ENCODE measurements at regions of chr19 and their contacts with region 1.

Region 1: DNA sequence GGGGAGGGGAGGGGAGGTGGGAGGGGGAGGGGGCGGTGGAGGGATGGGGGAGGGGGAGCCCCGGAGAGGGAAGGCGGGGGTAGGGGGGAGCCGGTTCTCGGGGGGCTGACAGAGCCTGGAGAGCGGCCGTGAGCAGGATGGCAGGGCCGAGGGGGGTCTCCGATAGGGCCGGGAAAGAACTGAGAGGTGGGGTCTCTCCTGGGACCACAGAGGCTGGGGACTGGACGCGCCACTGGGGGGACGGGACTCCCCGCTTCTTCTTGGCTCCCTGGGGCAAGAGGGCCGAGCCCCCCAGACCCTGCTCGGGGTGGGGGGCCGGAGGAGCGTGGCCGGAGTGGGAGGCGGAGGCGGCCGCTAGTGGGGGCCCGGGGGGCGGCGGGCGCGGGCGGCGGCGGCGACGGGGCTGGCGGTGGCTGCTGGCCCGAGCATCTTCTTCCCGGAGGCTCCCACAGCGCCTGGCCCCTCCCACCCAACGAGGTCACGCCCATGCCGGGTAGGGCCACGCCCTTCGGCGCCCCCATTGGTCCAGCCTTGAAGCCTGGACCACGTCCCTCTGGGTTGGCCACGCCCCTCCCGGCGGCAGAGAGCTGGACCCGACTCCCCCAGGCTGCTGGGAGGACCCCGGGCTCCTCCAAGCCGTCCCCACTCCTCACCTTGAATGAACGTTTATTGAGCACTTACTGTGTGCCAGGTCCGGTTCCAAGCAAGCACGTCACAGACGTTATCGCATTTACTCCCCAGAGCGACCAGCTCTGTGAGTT is at the start of gene NOVA2:
- DNase-seq: peak; percentile 83 to 100
- H3K4me3 ChIP-seq: peak within 1 kb of the TSS; percentile 47 to 82 (median 56)
- H3K27ac ChIP-seq: no peak within 1 kb of the TSS
- H3K4me1 ChIP-seq: peaks cover 2 to 12% (median 7%) of the 10 kb centered on the region in 4 experiments; a peak in 5 of 7 replicates
- H3K27me3 ChIP-seq: peaks cover 0 to 5% (median 2%) of the 10 kb centered on the region in 4 experiments; a peak in 3 of 7 replicates
- CTCF ChIP-seq: no peak
- EP300 ChIP-seq: no peak
- POLR2A ChIP-seq: no peak
- RAD21 ChIP-seq: no peak
- total RNA-seq, gene NOVA2: 22.7 and 24.6 TPM in 2 replicates

Region 2: DNA sequence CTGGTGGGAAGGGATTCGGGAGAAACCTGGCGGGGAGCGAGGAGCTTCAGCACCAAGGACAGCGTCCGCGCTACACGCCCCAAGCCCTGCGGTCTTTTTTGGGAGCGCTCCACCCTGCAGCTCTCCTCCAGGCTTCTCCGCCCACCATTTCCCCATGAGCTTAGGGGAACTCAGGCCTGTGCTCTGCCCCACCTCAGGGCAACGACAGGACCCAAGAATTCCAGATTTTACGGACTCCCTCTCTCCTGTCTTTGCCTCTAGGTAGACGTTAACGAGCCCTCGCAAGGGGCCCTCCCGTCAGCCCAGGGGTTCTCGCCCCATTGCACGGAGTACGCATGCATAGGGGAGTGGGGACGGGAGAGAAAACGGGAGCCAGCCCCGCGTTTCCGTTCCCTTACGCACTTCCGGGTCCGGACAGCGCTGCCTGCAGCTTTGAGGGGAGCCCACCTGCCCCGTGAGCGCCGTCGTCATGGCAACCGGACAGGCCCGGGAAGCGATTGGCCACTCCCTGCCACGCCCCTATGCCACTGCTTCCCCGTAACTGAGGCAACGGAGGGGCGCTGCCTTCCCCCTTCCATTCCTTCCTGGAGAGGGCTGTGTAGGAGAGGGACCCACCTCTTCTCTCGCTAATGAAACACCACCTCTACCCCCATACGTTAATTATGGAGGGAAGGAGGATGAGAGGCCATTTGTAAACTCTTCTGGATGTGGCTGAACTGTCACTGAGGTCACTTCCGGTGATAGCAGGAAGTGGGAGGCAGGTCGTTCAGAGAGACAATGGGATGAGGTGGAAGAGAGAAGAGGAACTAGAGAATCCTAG is 20.9 kb before region 1 on chr19:
- CTCF ChIA-PET with region 1: interaction called, 4 read pairs
- POLR2A ChIA-PET with region 1: interaction called, 18 read pairs
- DNase-seq: peak; percentile 81 to 96
- H3K4me3 ChIP-seq: peak overlapping the region; percentile 55 to 75 (median 71)
- H3K27ac ChIP-seq: peak overlapping the region; percentile 53
- H3K4me1 ChIP-seq: peaks cover 0 to 3% (median 0%) of the 10 kb centered on the region in 4 experiments; a peak in 3 of 7 replicates
- H3K27me3 ChIP-seq: no peaks in the 10 kb centered on the region
- CTCF ChIP-seq: no peak
- EP300 ChIP-seq: peak in 1 of 2 experiments; percentile 2; a peak in 1 of 3 replicates
- POLR2A ChIP-seq: peak in 1 of 2 experiments; percentile 56; a peak in 2 of 3 replicates
- RAD21 ChIP-seq: peak in 1 of 2 experiments; percentile 14; a peak in 1 of 4 replicates